Posterior cingulate gyrus (tissue), 11 donors: ENCODE measurements at regions of chr1 and their contacts with region 1.

Region 1: DNA sequence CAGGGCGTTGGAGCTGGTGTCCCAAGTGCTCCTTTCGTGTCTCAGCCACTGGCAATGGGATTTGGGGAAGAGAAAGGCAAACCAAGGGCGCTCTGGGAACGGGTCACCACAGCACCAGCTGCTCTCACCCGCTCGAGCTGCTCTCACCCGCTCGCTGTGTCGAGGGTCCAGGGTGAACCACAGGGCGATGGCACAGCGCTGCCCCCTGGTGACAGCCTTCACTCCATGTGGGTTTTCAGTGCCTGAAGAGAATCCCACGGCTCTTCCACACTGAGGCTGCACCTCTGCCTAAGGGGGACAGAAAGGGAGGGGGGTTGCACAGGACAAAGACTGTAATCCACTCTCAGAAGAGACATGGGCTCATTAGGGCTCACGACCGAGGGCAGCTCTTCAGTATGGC is 7.1 kb upstream of the CLDN19 start:
- DNase-seq: peak in 9 of 10 donors; percentile 45 to 92 (median 56)

Region 2: DNA sequence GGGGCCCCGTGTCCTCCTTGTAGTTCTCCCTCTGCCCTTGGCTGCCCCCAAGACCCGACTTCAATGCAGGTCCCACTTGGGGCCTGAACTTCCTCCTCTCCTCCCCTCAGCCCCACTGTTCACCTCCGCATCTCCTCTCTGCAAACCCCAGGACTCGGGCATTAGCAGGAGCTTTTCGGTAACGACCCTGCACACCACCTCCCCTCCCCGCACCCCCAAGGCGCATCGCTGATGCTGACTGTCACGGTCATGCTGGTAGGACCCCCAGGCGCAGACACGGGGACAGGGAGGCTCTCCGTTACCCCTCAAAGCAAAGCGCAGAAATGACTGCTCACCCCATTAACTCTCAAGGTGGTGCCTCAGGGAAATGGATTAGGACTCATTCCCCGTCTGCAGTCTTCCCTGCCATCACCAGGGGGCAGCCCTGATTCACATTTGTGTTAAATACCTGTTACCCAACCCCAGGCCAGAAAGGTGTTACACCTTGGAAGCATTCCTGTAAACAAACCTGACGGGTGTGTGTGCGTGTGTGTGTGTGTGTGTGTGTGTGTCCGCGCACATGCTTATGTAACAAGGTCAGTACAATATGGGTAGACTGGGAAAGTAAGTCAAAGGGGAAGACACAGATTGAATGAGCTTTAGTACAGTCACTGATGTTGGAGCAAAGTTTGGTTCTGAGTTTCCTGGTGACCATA is 600.4 kb before region 1 on chr1:
- intact Hi-C with region 1: loop called (anchors 5 kb)
- DNase-seq: peak in 9 of 10 donors; percentile 34 to 93 (median 70)

Region 3: DNA sequence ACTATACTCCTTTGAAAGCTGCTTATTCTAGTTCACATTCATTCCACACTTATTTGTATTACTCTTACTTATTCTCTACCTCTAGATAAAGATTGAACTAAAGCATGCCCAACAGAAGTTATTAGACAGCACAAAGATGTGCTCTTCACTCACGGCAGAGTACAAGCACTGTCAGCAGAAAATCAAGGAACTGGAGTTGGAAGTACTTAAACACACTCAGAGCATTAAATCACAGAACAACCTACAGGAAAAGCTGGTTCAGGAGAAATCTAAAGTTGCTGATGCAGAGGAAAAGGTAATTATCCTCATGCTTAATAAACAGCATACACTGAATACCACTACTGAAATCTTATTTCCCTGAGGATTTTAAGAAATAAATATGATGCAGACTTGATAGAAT is 170.2 kb before region 1 on chr1:
- intact Hi-C with region 1: loop called (anchors 5 kb)
- DNase-seq: no peak

Region 4: DNA sequence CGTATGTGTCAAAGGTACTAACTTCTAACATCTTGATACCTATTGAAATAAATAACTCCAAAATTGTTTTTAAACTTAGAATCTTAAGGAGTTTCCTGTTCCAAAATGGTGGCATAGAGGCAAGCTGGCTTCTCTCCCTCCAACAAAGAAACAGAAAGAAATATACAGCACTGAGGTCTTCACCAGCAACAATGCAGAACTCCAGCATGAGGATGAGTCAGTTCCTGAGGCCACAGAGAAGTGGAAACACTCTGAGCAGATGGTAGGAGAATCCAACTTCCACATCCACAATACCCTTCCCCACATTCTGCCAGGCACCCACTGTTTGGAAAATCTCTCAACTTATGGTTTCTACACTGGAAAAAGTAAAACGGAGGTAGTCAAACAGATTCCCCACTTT is 101.1 kb before region 1 on chr1:
- intact Hi-C with region 1: no loop called
- DNase-seq: no peak

Region 5: DNA sequence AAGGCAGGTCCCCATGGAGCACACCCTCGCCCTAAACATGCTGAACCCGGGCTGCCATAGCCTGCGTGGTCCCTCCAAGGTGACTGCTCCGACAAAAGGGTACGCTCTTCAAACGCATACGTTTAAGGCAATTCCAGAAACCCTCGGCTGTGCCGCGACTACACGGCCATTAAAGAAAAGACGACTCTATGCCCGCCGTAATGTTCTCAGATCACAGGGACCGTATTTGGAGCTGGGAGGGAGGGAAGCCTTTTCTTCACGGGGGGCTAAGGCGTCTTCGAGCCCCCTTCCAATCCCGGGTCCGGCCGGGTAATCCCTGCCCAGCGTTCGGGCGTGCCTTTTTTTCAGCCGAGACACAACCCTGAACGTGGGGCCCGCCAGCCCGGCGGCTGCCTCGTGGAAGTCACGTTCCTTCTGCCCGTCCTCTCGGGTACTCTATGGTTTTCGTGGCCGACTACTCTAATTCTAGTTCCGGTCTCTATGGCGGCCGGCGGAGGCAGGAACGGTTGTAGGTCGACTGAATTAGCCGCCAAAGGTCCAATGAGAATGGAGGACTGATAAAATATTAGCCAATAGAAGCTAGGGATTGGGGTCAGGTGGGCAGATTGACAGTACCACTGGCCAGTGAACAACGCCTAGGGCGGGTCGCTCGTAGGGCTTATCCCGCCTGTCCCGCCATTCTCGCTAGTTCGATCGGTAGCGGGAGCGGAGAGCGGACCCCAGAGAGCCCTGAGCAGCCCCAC is 65.2 kb before region 1 on chr1 and contains the start of gene YBX1:
- intact Hi-C with region 1: loop called (anchors 10 kb)
- DNase-seq: peak; percentile 92 to 99 (median 95)